Activated CD4-positive, alpha-beta T cell treated with anti-CD3 and anti-CD28 coated beads for 36 hours (primary cell): ENCODE measurements at regions of chr9 and their contacts with region 1.

Region 1: DNA sequence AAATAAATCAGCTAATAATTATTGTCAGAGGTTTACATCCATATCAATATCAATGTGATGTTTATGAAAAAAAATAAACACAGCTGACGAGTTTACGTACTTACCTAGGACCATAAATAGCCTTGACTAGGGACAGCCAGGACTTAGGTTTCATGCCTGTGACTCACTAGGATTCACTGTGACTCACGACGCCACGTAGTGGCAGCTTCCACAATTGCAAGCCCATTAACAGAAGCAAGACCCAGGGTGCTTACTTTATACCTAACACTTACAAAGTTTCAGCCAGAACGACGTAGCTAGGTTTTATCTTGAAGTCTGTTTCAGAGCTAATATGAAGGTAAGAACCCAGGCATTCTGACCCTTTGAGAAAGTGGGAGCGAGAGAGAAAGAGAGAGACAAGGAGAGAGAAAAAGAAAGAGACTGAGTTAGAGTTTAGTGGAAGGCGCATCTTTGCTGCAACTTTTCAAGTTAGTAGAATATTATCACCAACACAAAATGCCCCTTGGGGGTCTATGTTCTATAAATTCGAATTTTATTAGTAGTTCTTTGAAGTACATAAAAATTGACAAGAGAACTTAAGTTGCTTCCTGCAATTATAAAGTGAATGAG is 191.2 kb downstream of the GNA14 start:
- DNase-seq: peak; percentile 92
- ATAC-seq: peak; percentile 83
- H3K4me3 Mint-ChIP-seq: no peak overlapping the region
- H3K27ac Mint-ChIP-seq: no peak overlapping the region
- H3K4me1 Mint-ChIP-seq: peaks cover 22% of the 10 kb centered on the region
- H3K27me3 Mint-ChIP-seq: no peaks in the 10 kb centered on the region

Region 2: DNA sequence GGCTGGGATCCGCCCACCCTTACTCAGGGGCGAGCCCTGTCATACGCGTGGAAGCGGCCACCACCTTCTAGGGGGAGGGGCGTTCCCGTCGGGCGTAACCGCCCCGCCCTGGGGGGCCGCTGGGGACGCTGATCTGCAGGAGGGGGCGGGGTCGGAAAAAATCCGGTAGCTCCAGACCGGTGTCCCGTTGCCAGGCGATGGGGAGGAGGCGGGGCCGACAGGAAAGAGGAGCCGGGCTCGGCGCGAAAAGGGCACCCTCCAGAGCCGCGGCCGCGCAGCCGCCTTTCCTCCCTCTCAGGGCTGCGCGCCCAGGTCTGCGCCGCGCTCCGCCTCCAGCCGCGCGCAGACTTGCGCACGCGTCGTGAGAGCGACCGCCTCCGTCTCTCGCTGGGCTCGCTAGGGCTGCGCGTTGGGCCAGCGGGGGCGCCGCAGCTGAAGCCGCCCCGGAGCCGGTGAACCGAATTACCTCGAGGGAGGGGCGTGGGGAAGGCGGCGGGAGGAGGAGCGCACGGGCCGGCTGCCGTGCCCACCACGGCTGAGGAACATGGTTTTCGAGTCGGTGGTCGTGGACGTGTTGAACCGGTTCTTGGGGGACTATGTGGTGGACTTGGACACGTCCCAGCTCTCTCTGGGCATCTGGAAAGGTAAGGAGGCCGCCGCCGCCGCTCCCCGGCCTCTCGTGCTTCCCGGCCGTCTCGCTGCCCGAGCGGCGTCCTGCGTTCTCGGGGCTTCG is 279.6 kb before region 1 on chr9 and contains the start of gene VPS13A:
- CTCF ChIA-PET with region 1: no interaction called
- POLR2A ChIA-PET with region 1: no interaction called
- intact Hi-C with region 1: loop called (anchors 5 to 10 kb)
- DNase-seq: peak; percentile 98
- ATAC-seq: peak; percentile 92
- H3K4me3 Mint-ChIP-seq: peak within 1 kb of the TSS; percentile 97
- H3K27ac Mint-ChIP-seq: peak within 1 kb of the TSS; percentile 93
- H3K4me1 Mint-ChIP-seq: peaks cover 23% of the 10 kb centered on the region
- H3K27me3 Mint-ChIP-seq: no peaks in the 10 kb centered on the region
- total RNA-seq, gene VPS13A: 33.3 to 33.6 TPM

Region 3: GRCh38 chr9:77440057-77440456 is 16.9 kb before region 1 on chr9:
- CTCF ChIA-PET with region 1: interaction called, 85 read pairs
- POLR2A ChIA-PET with region 1: no interaction called
- intact Hi-C with region 1: no loop called
- DNase-seq: no peak
- ATAC-seq: no peak
- H3K4me3 Mint-ChIP-seq: no peak overlapping the region
- H3K27ac Mint-ChIP-seq: no peak overlapping the region
- H3K4me1 Mint-ChIP-seq: no peaks in the 10 kb centered on the region
- H3K27me3 Mint-ChIP-seq: no peaks in the 10 kb centered on the region

Region 4: DNA sequence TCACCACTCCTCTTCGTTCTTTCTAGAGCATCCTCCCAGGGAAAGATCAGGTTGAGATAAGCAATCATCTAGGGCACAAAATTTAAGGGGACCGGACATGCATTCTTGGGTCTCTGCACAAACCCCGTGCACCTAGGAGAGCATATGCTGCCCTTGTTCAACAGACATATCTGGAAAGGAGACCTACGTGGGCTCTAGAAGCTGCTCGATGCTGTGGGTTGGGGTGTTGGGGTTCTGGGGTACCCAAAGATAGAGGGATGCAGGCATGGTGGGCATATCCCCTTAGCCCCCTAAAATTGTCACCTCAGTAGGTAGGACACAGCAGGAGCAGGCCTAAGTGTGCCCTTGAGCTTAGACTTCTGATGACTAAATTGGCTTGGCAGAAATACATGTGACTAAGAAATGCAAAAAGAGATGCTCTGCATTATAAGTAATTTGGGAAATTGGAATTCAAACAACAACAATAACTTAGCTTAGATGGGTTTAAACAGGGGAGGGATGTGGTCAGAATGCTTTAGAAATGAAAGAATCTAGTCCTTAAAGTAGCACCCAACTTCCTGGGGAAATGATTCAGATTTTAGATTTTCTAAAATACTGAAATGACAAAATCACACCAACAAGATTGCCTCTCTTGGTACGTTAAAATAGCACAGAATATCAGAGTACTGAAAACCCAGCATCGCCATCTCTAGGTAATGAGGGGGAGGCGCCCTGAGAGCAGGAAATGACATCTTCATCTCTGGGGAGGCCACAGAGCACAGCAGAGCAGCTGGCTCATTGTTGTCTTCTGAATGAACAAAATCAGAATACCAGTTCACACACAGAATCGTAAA is 18.9 kb after region 1 on chr9:
- CTCF ChIA-PET with region 1: interaction called, 27 read pairs
- POLR2A ChIA-PET with region 1: no interaction called
- intact Hi-C with region 1: loop called in 1 of 2 experiments (anchors 1 kb)
- DNase-seq: peak; percentile 84
- ATAC-seq: peak; percentile 99
- H3K4me3 Mint-ChIP-seq: peak overlapping the region; percentile 9
- H3K27ac Mint-ChIP-seq: peak overlapping the region; percentile 94
- H3K4me1 Mint-ChIP-seq: peaks cover 31% of the 10 kb centered on the region
- H3K27me3 Mint-ChIP-seq: no peaks in the 10 kb centered on the region

Region 5: GRCh38 chr9:77648234-77649120 is 191.5 kb after region 1 on chr9 and contains the start of gene GNA14:
- CTCF ChIA-PET with region 1: interaction called, 4 read pairs
- POLR2A ChIA-PET with region 1: no interaction called
- intact Hi-C with region 1: loop called in 1 of 2 experiments (anchors 5 kb)
- DNase-seq: peak; percentile 46
- ATAC-seq: peak; percentile 23
- H3K4me3 Mint-ChIP-seq: peak within 1 kb of the TSS; percentile 65
- H3K27ac Mint-ChIP-seq: no peak within 1 kb of the TSS
- H3K4me1 Mint-ChIP-seq: peaks cover 11% of the 10 kb centered on the region
- H3K27me3 Mint-ChIP-seq: peaks cover 38% of the 10 kb centered on the region
- total RNA-seq, gene GNA14: 0.11 to 0.54 TPM

Region 6: DNA sequence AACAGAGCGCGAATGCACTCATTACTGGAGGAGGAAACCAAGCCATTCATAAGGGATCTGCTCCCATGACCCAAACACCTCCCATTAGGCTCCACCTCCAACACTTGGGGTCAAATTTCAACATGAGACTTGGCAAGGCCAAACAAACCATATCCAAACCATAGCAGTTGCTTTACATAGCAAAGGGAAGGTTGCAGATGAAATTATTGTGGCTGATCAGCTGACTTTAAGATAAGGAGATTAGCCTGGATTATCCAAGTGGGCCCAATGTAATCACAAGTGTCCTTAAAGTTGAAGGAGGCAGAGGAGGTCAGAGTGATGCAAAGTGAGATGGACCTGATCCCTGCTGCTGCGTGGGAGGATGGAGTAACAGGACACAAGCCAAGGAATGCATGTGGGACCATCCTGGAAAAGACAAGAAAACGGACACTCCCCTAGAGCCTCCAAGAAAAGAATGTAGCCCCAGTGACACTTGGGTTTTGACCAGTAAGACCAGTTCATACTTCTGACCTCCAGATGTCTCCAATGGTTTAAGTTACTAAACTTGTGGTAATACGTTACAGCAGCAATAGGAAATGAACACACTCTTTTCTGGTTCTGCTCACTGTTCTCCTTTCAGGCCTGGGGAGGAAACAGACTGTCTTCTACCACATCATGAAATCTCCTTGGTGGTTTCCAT is 407.4 kb after region 1 on chr9:
- CTCF ChIA-PET with region 1: no interaction called
- POLR2A ChIA-PET with region 1: no interaction called
- intact Hi-C with region 1: no loop called
- DNase-seq: no peak
- ATAC-seq: no peak
- H3K4me3 Mint-ChIP-seq: no peak overlapping the region
- H3K27ac Mint-ChIP-seq: no peak overlapping the region
- H3K4me1 Mint-ChIP-seq: peaks cover 5% of the 10 kb centered on the region
- H3K27me3 Mint-ChIP-seq: no peaks in the 10 kb centered on the region

Region 7: DNA sequence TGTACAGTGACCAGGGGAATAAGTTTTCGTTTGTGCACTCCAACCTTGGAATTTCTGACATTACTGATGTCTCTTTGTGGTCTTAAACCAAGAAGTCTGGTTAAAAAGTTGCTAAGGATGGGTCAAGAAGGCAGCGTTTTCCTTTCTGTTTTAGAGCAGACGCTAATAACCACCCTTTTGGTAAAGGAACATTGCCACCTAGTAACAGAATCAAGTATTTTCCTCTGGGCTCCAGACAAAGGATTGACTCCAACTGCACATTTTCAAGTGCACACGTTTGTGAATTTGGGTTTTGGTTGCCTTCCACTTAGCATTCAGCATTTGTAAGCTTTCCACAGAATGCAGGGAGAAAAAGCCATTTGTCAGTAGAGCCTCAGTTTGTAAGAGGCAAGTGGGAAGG is 756.8 kb after region 1 on chr9:
- CTCF ChIA-PET with region 1: interaction called, 3 read pairs
- POLR2A ChIA-PET with region 1: no interaction called
- intact Hi-C with region 1: loop called in 1 of 2 experiments (anchors 5 kb)
- DNase-seq: no peak
- ATAC-seq: peak; percentile 55
- H3K4me3 Mint-ChIP-seq: no peak overlapping the region
- H3K27ac Mint-ChIP-seq: no peak overlapping the region
- H3K4me1 Mint-ChIP-seq: peaks cover 37% of the 10 kb centered on the region
- H3K27me3 Mint-ChIP-seq: no peaks in the 10 kb centered on the region